ENCODE measurements at regions of chr5 and their contacts with region 1.

Region 1: GRCh38 chr5:96614110-96614691 is 48.0 kb upstream of the CAST start:
- DNase-seq: peak in 6 of 9 donors; percentile 30 to 51 (median 38)
- ATAC-seq: peak; percentile 72
- H3K4me3 ChIP-seq: no peak overlapping the region
- H3K4me3 Mint-ChIP-seq: no peak overlapping the region
- H3K27ac ChIP-seq: no peak overlapping the region
- H3K27ac Mint-ChIP-seq: no peak overlapping the region
- H3K4me1 ChIP-seq: peaks cover 0 to 5% of the 10 kb centered on the region in 2 donors
- H3K4me1 Mint-ChIP-seq: peaks cover 0 to 5% (median 0%) of the 10 kb centered on the region in 7 donors
- H3K27me3 ChIP-seq: no peaks in the 10 kb centered on the region
- H3K27me3 Mint-ChIP-seq: peaks cover 5 to 43% (median 8%) of the 10 kb centered on the region in 5 donors

Region 2: GRCh38 chr5:96729156-96729555 is 115.0 kb after region 1 on chr5:
- CTCF ChIA-PET with region 1: interaction called, 14 read pairs
- POLR2A ChIA-PET with region 1: interaction called, 3 read pairs
- intact Hi-C with region 1: loop called (anchors 1 kb)
- DNase-seq: no peak
- ATAC-seq: no peak
- H3K4me3 ChIP-seq: no peak overlapping the region
- H3K4me3 Mint-ChIP-seq: peak overlapping the region in 1 of 10 donors; percentile 15
- H3K27ac ChIP-seq: no peak overlapping the region
- H3K27ac Mint-ChIP-seq: peak overlapping the region in 2 of 9 donors; percentile 18 to 30
- H3K4me1 ChIP-seq: no peaks in the 10 kb centered on the region
- H3K4me1 Mint-ChIP-seq: peaks cover 5 to 39% (median 9%) of the 10 kb centered on the region in 7 donors
- H3K27me3 ChIP-seq: no peaks in the 10 kb centered on the region
- H3K27me3 Mint-ChIP-seq: no peaks in the 10 kb centered on the region